HepG2 (cell line): ENCODE measurements at regions of chr14 and their contacts with region 1.

Region 1: GRCh38 chr14:45716572-45716971 is 463.6 kb upstream of the MIS18BP1 start:
- DNase-seq: peak; percentile 3
- ATAC-seq: peak; percentile 50; the same call in 1 of the 3 replicates
- H3K4me3 ChIP-seq: no peak overlapping the region
- H3K27ac ChIP-seq: no peak overlapping the region
- H3K4me1 ChIP-seq: no peaks in the 10 kb centered on the region
- H3K27me3 ChIP-seq: no peaks in the 10 kb centered on the region; a peak in 1 of 5 replicates
- CTCF ChIP-seq: no peak
- EP300 ChIP-seq: no peak
- POLR2A ChIP-seq: no peak
- RAD21 ChIP-seq: no peak

Region 2: GRCh38 chr14:45698462-45699134 is 18.0 kb before region 1 on chr14:
- CTCF ChIA-PET with region 1: no interaction called
- POLR2A ChIA-PET with region 1: no interaction called
- in situ Hi-C with region 1: no loop called
- intact Hi-C with region 1: no loop called
- DNase-seq: no peak
- ATAC-seq: no peak
- H3K4me3 ChIP-seq: no peak overlapping the region
- H3K27ac ChIP-seq: no peak overlapping the region
- H3K4me1 ChIP-seq: no peaks in the 10 kb centered on the region
- H3K27me3 ChIP-seq: no peaks in the 10 kb centered on the region
- CTCF ChIP-seq: no peak
- EP300 ChIP-seq: no peak
- POLR2A ChIP-seq: no peak
- RAD21 ChIP-seq: no peak

Region 3: GRCh38 chr14:45810152-45810872 is 93.7 kb after region 1 on chr14:
- CTCF ChIA-PET with region 1: no interaction called
- POLR2A ChIA-PET with region 1: no interaction called
- in situ Hi-C with region 1: no loop called
- intact Hi-C with region 1: loop called (anchors 1 kb)
- DNase-seq: no peak
- ATAC-seq: no peak
- H3K4me3 ChIP-seq: no peak overlapping the region
- H3K27ac ChIP-seq: no peak overlapping the region
- H3K4me1 ChIP-seq: no peaks in the 10 kb centered on the region
- H3K27me3 ChIP-seq: no peaks in the 10 kb centered on the region
- CTCF ChIP-seq: no peak
- EP300 ChIP-seq: no peak
- POLR2A ChIP-seq: no peak
- RAD21 ChIP-seq: no peak